ENCODE measurements at regions of chr5 and their contacts with region 1.

Region 1: DNA sequence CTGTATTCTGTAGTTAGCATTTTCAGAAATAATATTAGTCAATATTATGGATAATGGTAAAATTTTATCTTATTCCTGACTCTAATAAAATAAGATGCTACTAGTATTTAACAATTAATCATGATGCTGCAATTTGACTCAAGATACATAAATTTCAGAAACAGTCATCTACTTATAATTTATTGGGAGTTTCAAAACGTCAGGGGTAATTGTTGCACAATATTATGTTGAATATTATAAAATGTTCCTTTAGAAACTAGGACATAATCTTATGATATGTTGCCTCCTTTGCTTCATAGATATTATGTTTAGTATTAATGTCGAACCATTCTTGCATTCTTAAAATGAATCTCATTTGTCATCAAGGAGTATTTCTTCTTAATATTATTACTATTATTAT is 140.5 kb downstream of the TAF11L14 start:
- DNase-seq: no peak
- H3K4me3 ChIP-seq: no peak overlapping the region
- H3K27ac ChIP-seq: no peak overlapping the region
- H3K4me1 ChIP-seq: no peaks in the 10 kb centered on the region
- H3K27me3 ChIP-seq: no peaks in the 10 kb centered on the region
- CTCF ChIP-seq: no peak
- POLR2A ChIP-seq: no peak

Region 2: GRCh38 chr5:17763301-17763700 is 11.4 kb before region 1 on chr5:
- intact Hi-C with region 1: loop called (anchors 1 kb)
- DNase-seq: no peak
- H3K4me3 ChIP-seq: no peak overlapping the region
- H3K27ac ChIP-seq: no peak overlapping the region
- H3K4me1 ChIP-seq: no peaks in the 10 kb centered on the region
- H3K27me3 ChIP-seq: no peaks in the 10 kb centered on the region
- CTCF ChIP-seq: no peak
- POLR2A ChIP-seq: no peak